ENCODE measurements at regions of chr2 and their contacts with region 1.

Region 1: GRCh38 chr2:105797298-105797819 is 52.6 kb downstream of the NCK2 start:
- DNase-seq: no peak
- CTCF ChIP-seq: no peak

Region 2: DNA sequence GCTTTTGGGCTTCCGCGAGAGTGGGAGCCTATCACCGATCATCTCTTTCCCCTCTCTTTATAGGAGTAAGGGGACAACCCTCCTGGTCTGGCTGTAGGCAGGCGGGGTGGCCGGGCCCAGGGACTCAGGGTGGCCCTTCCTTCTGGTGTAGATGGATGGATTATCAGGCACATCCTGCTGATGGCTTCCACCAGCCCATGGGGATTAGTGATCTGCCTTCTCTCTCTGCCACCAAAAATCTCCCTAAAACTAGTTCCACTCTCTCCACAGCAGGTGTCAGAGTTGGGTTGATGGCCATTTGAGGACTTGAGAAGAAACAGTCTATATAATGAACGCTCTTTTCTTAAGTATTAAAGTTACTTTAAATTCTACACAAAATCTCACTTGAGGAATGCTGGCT is 15.2 kb before region 1 on chr2:
- CTCF ChIA-PET with region 1: interaction called, 10 read pairs
- POLR2A ChIA-PET with region 1: no interaction called
- DNase-seq: no peak
- CTCF ChIP-seq: no peak

Region 3: DNA sequence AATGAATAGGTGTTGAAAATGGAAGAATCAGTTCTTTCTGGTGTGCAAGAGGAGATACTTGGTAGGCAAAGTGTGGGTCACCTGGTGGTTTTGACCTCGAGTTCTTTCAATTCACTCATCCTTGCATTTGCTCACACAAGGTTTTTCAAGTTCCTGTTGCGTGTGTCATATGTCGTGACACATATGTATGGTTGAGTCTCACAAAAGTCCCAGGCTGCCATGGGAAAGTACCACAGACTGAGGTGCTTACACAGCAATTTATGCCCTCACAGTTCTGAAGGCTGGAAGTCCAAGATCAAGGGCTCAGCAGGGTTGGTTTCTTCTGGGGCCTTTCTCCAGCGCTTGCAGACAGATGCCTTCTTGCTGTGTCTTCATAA is 11.7 kb after region 1 on chr2:
- CTCF ChIA-PET with region 1: interaction called, 13 read pairs
- POLR2A ChIA-PET with region 1: interaction called, 5 read pairs
- DNase-seq: no peak
- CTCF ChIP-seq: no peak